Mammary epithelial cell (primary cell): ENCODE measurements at regions of chr10 and their contacts with region 1.

Region 1: DNA sequence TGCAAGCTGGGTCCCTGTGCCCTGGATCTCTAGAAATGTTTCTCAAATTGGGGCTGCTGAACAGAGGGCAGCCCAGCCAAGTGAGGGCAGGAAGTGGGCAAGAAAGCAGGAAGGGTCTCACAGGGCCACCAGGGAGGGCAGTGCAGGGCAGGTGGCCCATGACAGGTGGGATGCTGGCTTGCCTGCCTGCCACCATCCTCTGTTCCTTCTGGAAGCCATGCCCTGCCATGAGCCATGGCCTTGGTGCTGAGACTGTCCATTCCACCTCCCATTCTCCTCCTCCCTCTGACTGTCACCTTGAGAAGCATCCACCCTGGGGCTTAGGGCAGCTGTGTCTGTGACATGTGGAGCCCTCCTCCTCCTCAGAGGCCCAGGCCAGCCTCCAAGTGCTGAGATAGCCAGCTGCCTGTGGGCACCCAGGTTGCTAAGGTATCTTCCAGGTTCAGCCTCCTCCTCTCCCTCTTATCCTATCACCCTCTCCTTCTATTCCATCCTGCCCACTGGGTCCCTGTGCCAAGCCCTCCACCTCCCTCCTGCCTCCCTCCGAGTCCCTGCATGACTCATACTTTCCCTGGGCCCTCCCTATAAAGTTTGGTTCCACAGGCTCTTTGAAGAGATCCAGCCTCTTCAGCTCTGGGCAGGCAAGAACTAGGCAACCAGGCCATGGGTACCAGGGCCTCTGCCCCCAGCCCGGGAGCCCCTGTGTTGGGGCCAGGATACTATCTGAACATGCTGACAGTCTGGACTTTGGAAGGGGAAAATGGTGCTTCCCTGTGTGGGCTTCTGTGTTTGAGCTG is 1.3 kb downstream of the VSIR start:
- DNase-seq: peak; percentile 78
- H3K4me3 ChIP-seq: peak overlapping the region; percentile 73 to 78 (median 75)
- H3K27ac ChIP-seq: peak overlapping the region; percentile 86
- H3K4me1 ChIP-seq: peaks cover 61% of the 10 kb centered on the region
- H3K27me3 ChIP-seq: no peaks in the 10 kb centered on the region
- CTCF ChIP-seq: no peak

Region 2: DNA sequence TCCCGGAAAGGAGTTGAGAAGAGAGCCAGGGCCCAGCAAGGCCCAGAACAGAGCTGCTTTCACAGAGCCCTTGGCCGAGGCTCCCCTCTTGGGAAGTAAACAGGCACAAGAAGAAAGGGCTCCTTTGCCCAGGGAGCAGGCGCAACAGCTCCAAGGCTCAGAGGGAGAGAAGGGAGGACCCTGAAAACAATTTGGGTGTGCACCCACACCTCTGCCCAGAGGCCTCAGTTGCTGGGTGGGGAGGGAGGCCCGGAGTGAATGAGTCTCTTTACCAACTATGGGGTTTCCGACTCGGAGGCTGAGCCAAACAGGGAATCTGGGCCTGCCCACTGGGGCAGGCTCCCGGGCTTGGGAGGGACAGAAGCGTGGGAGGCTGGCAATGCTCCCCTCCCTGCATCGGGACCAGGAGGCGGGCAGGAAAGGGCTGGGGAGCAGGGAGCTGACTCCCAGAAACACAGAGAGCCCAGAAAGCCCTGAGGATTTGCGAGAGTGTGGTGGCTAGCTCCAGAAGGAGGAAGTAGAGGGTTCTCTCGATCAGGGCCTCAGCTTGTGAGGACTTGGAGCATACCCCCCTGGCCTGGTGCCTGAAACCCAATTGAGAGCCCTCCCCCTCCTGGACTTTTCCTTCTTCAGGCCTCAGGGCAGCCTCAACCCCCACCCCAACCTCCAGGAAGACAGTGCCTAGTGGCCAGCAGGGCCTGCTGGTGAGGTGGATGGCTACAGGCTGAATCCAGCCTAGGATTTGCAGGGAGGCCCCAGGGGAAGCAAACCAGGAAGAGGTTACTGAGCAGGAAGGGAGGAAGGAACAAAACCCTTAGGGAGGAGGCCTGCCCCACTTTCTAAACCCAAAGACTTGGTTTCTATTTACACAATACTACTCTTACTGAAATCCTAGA is 58.6 kb before region 1 on chr10:
- CTCF ChIA-PET with region 1: interaction called, 7 read pairs
- dilution Hi-C with region 1: no loop called
- in situ Hi-C with region 1: no loop called
- intact Hi-C with region 1: loop called (anchors 1 kb)
- DNase-seq: peak; percentile 95
- H3K4me3 ChIP-seq: no peak overlapping the region
- H3K27ac ChIP-seq: peak overlapping the region; percentile 73
- H3K4me1 ChIP-seq: peaks cover 34% of the 10 kb centered on the region
- H3K27me3 ChIP-seq: no peaks in the 10 kb centered on the region
- CTCF ChIP-seq: peak; percentile 10 to 33

Region 3: DNA sequence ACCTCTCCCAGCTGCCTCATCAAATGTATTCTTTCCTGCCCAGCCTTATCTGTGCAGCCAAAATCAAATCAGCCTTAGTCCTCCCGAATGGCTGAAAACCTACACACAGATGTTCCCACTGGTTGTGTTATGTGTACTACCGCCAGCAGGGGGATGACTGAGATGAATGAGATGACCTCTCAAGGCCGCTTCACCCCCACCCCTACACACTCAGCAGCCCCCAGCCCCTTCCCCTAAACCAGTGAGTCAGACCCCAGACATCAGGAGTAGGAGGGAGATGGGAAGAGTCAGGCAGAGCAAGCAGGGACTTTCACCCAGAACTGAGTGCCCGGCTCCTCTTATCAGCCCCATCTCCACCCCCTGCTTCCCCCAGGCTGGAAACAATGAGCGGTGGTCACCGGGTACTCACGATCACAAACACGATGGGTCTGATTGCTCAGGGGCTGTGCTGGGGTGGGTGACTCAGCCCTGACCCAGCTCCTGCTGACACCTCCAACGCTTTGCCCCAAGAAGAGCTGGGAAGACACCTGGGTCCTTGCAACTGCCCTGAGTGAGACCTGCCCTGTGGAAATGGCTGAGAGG is 45.9 kb before region 1 on chr10:
- CTCF ChIA-PET with region 1: no interaction called
- dilution Hi-C with region 1: no loop called
- in situ Hi-C with region 1: no loop called
- intact Hi-C with region 1: loop called (anchors 1 kb)
- DNase-seq: peak; percentile 33
- H3K4me3 ChIP-seq: no peak overlapping the region
- H3K27ac ChIP-seq: no peak overlapping the region
- H3K4me1 ChIP-seq: peaks cover 27% of the 10 kb centered on the region
- H3K27me3 ChIP-seq: no peaks in the 10 kb centered on the region
- CTCF ChIP-seq: peak; percentile 38 to 39

Region 4: GRCh38 chr10:71812016-71812912 is 40.2 kb after region 1 on chr10:
- CTCF ChIA-PET with region 1: no interaction called
- dilution Hi-C with region 1: no loop called
- in situ Hi-C with region 1: no loop called
- intact Hi-C with region 1: loop called (anchors 2 kb)
- DNase-seq: peak; percentile 29
- H3K4me3 ChIP-seq: no peak overlapping the region
- H3K27ac ChIP-seq: no peak overlapping the region
- H3K4me1 ChIP-seq: no peaks in the 10 kb centered on the region
- H3K27me3 ChIP-seq: no peaks in the 10 kb centered on the region
- CTCF ChIP-seq: peak; percentile 64 to 88

Region 5: DNA sequence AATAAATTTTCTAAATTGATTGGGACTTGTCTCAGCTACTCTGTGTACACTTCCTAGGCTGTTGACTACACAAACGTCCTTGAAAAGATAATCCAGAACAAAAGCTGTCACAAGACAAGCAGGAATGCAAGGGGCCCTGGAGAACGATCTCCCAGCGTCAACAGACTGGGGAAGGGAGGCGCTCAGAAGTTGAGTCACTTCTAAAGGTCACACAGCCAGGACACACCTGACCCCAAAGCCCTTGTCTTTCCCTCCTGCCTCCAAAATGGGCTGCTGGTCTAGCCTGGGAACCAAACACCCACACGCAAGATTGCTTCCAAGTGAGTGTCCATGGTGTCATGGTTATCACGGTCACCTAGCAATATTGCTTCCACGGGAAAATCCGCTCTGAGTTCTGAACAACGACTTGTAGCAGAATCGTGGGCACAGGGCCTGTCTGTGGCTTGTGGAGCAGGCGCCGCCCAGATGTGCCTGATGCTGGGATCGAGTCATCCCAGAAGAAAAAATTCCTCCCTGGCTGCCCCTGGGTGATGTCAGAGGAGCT is 266.5 kb after region 1 on chr10:
- CTCF ChIA-PET with region 1: no interaction called
- dilution Hi-C with region 1: no loop called
- in situ Hi-C with region 1: no loop called
- intact Hi-C with region 1: no loop called
- DNase-seq: peak; percentile 58
- H3K4me3 ChIP-seq: no peak overlapping the region
- H3K27ac ChIP-seq: no peak overlapping the region
- H3K4me1 ChIP-seq: no peaks in the 10 kb centered on the region
- H3K27me3 ChIP-seq: no peaks in the 10 kb centered on the region
- CTCF ChIP-seq: no peak

Region 6: GRCh38 chr10:72567884-72568640 is 796.0 kb after region 1 on chr10:
- CTCF ChIA-PET with region 1: no interaction called
- dilution Hi-C with region 1: no loop called
- in situ Hi-C with region 1: no loop called
- intact Hi-C with region 1: no loop called
- DNase-seq: no peak
- H3K4me3 ChIP-seq: no peak overlapping the region
- H3K27ac ChIP-seq: no peak overlapping the region
- H3K4me1 ChIP-seq: no peaks in the 10 kb centered on the region
- H3K27me3 ChIP-seq: no peaks in the 10 kb centered on the region
- CTCF ChIP-seq: peak; percentile 39 to 44